ENCODE measurements at regions of chr5 and their contacts with region 1.

Region 1: DNA sequence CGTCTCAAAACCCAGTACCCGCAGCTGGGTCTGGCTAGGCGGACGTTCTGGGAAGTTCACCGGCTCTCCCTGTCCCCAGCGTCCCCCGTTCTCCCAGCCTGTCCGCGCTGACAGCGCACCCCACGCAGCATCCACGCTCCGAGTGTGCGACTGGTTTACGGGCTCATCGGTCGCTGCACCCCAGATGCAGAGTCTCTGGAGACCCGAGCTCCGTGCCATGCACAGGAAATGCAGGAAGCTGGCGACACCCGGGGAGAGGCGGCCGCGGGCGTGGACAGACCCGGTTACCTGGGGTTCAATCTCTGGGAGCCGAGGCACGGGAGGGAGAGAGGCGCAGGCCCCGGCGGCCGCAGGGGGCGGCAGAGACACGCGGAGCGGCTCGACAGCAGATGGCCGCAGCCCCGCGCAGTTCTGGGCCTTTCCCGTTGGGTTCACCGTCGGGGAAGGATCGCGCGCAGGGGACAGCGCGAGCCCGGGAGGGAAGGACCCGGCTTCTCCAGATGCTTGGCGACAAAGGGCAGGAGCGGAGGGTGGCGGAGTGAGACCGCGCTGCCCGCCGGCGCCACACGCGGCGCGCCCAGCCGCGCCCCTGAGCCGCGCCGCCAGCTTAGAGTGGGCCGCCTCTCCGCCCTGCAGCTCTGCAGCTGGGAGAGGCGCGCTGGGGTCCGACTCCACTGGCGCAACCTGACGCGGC is 558 bp downstream of the SHROOM1 start:
- DNase-seq: peak; percentile 73
- H3K4me3 ChIP-seq: peak overlapping the region; percentile 63
- H3K27ac ChIP-seq: no peak overlapping the region
- H3K4me1 ChIP-seq: peaks cover 5% of the 10 kb centered on the region
- CTCF ChIP-seq: peak; percentile 81

Region 2: GRCh38 chr5:132641241-132641723 is 188.6 kb before region 1 on chr5:
- CTCF ChIA-PET with region 1: no interaction called
- POLR2A ChIA-PET with region 1: no interaction called
- intact Hi-C with region 1: no loop called
- DNase-seq: no peak
- H3K4me3 ChIP-seq: no peak overlapping the region
- H3K27ac ChIP-seq: no peak overlapping the region
- H3K4me1 ChIP-seq: no peaks in the 10 kb centered on the region
- CTCF ChIP-seq: no peak

Region 3: DNA sequence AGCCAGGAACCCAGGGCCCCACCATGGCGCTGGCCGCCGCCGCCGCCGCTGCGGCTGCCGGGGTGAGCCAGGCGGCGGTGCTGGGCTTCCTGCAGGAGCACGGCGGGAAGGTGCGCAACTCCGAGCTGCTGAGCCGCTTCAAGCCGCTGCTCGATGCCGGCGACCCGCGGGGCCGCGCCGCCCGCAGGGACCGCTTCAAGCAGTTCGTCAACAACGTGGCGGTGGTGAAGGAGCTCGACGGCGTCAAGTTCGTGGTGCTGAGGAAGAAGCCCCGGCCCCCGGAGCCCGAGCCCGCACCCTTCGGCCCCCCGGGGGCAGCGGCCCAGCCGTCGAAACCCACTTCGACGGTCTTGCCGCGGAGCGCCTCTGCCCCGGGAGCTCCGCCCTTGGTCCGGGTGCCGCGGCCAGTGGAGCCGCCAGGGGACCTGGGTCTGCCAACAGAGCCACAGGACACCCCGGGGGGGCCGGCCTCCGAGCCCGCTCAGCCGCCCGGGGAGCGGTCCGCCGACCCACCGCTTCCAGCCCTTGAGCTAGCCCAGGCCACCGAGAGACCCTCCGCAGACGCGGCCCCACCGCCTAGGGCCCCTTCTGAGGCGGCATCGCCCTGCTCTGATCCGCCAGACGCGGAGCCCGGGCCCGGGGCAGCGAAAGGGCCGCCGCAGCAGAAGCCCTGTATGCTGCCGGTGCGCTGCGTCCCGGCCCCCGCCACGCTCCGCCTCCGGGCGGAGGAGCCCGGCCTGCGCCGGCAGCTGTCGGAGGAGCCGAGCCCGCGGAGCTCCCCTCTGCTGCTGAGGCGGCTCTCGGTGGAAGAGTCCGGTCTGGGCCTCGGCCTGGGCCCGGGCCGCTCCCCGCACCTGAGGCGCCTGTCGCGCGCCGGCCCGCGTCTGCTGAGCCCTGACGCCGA is 16.0 kb before region 1 on chr5:
- CTCF ChIA-PET with region 1: no interaction called
- POLR2A ChIA-PET with region 1: no interaction called
- intact Hi-C with region 1: no loop called
- DNase-seq: no peak
- H3K4me3 ChIP-seq: no peak overlapping the region
- H3K27ac ChIP-seq: no peak overlapping the region
- H3K4me1 ChIP-seq: no peaks in the 10 kb centered on the region
- CTCF ChIP-seq: no peak

Region 4: GRCh38 chr5:132883261-132883834 is 53.5 kb after region 1 on chr5:
- CTCF ChIA-PET with region 1: interaction called, 3 read pairs
- POLR2A ChIA-PET with region 1: interaction called, 3 read pairs
- intact Hi-C with region 1: loop called (anchors 5 kb)
- DNase-seq: peak; percentile 60
- H3K4me3 ChIP-seq: no peak overlapping the region
- H3K27ac ChIP-seq: no peak overlapping the region
- H3K4me1 ChIP-seq: peaks cover 5% of the 10 kb centered on the region
- CTCF ChIP-seq: peak; percentile 85

Region 5: GRCh38 chr5:133287500-133287899 is 457.6 kb after region 1 on chr5:
- CTCF ChIA-PET with region 1: no interaction called
- POLR2A ChIA-PET with region 1: no interaction called
- intact Hi-C with region 1: loop called (anchors 10 kb)
- DNase-seq: peak; percentile 36
- H3K4me3 ChIP-seq: no peak overlapping the region
- H3K27ac ChIP-seq: no peak overlapping the region
- H3K4me1 ChIP-seq: no peaks in the 10 kb centered on the region
- CTCF ChIP-seq: peak; percentile 68

Measured in OCI-LY7 (cell line).